ENCODE measurements at regions of chr22 and their contacts with region 1.

Region 1: DNA sequence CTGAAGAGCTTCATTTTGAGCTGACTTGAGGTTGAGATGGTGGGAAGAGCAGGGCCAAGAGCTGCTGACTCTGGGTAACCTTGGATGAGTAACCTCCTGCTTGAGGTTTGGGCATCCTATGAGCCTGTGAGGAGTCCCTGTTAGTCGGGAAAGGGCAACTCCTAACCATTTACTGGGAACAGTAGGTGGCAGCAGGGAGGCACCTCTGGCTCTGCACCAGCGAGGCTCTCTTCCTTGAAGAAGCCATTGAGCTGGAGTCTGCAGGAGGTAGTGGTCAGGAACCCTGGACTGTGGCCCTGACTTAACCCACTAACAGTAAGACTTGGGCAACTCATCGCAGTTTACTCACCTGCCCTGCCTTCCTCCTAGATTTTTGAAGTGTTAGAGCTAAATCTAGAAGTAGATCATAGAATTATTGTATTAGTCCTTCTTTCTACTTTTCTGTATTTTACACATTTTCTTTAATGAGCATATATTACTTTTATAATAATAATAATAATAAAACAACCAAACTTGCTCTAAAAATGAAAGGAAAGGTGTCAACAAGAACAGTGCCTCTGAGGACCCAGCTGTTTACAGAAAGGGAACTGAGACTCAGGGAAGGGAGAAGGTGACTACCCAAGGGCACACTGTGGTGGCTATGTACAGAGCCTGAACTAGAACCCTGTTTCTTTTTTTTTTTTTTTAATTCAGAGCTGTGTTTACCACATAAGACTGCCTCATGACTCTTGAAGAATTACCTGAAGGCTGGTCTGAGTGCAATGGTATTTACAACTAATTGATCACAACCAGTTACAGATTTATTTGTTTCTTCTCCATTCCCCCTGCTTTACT is 47.5 kb downstream of the MEI1 start:
- DNase-seq: peak; percentile 85
- ATAC-seq: peak; percentile 99
- H3K4me3 ChIP-seq: no peak overlapping the region
- H3K27ac ChIP-seq: no peak overlapping the region
- H3K4me1 ChIP-seq: no peaks in the 10 kb centered on the region
- H3K27me3 ChIP-seq: no peaks in the 10 kb centered on the region
- CTCF ChIP-seq: peak; percentile 77

Region 2: DNA sequence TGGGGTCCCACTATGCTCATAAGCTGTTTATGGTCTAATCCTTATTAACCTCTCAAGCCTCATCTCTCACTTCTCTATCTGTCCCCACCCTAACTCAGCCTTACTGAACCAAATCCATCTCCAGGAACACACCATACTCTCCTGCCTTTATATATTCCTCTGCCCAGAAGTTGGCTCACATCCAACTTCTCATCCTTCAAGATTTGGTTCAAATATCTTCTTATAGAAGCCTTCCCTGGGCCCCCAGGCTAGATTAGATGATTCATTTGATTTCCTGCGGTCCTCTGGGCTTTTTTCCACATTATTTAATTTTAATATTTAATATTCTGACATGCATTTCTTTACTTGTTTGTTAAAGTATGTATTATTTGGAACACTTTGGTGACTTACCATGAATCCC is 24.3 kb before region 1 on chr22:
- CTCF ChIA-PET with region 1: no interaction called
- POLR2A ChIA-PET with region 1: no interaction called
- intact Hi-C with region 1: no loop called
- DNase-seq: peak; percentile 3
- ATAC-seq: no peak
- H3K4me3 ChIP-seq: no peak overlapping the region
- H3K27ac ChIP-seq: no peak overlapping the region
- H3K4me1 ChIP-seq: no peaks in the 10 kb centered on the region
- H3K27me3 ChIP-seq: no peaks in the 10 kb centered on the region
- CTCF ChIP-seq: no peak

Region 3: DNA sequence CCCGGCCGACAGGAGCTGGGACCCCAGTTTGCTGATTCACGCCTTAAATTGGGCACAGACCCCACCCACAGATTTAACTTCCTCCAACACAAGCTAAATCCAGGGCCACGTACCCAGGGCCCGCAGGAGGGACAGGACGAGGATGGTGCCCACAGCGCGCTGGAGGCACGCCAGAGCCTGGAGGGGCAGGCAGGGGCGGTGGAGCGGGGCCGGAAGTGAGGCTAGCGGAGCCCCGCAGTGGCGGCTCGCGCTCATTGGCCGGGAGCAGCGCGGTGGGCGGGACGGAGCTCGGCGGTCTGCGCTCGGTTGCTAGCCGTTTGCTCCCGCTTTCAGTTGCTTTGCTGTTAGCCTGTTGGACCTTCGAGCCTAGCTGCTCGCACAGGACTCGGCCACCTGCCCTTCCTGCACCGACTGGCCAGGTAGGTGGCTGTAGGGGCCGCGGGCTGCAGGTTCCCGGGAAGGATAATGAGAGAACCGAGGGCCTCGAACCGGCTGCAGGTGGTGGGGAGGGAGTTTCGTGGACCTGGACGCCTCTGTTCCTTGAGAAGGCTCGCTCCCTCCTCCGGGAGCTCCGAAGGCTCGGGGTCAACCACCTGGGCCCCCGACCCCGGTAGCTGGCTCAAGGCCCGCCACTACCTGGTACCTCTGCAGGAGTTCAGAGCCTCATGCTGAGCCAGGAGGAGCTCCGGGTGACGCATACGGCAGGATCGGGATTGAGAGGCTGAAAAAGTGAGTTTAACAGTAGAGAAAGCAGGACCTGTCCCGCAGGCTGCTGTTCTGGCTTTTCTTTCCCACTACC is 53.8 kb after region 1 on chr22 and contains the start of gene CCDC134:
- CTCF ChIA-PET with region 1: interaction called, 5 read pairs
- POLR2A ChIA-PET with region 1: interaction called, 5 read pairs
- intact Hi-C with region 1: loop called (anchors 5 kb)
- DNase-seq: peak; percentile 80
- ATAC-seq: peak; percentile 95
- H3K4me3 ChIP-seq: peak within 1 kb of the TSS; percentile 97
- H3K27ac ChIP-seq: peak within 1 kb of the TSS; percentile 56
- H3K4me1 ChIP-seq: peaks cover 14% of the 10 kb centered on the region
- H3K27me3 ChIP-seq: no peaks in the 10 kb centered on the region
- CTCF ChIP-seq: no peak
- total RNA-seq, gene CCDC134: 7.9 and 17.6 TPM in 2 replicates

Region 4: DNA sequence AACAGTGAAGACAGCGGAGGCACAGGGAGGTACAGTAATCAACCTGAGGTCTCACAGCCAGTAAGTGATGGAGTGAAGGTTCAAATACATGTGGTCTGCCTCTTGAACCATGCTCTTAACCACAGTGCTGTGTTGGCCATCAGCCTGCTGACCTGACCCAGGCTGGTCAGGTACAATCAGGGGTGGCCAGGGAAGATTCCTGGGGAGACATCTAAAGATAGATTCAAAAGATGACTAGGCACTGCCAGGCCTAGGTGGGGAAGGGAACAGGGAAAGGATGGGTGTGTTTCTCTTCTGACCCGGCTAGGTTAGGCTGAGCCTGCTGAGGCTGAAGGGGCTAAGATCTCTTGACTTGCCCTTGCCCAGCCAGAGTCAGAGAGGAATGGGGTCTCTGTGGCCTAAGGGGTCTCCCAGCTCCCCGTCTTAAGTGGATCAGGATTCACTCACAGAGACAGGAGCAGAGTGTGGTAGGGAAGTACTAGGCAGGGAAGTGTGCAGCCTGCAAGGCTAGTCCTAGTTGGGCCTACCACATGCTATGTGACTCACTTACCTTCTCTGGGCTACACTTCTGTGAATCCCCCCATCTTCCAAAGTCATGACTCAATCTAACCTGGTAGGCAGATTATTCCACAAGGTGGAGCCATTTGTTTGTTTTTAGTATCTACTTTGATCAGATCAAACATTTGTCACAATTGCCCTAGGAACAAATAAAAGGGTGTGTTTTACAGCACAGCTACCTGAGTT is 75.7 kb after region 1 on chr22:
- CTCF ChIA-PET with region 1: no interaction called
- POLR2A ChIA-PET with region 1: no interaction called
- intact Hi-C with region 1: loop called (anchors 5 kb)
- DNase-seq: peak; percentile 91
- ATAC-seq: peak; percentile 93
- H3K4me3 ChIP-seq: no peak overlapping the region
- H3K27ac ChIP-seq: peak overlapping the region; percentile 75
- H3K4me1 ChIP-seq: peaks cover 13% of the 10 kb centered on the region
- H3K27me3 ChIP-seq: no peaks in the 10 kb centered on the region
- CTCF ChIP-seq: peak; percentile 72

Region 5: DNA sequence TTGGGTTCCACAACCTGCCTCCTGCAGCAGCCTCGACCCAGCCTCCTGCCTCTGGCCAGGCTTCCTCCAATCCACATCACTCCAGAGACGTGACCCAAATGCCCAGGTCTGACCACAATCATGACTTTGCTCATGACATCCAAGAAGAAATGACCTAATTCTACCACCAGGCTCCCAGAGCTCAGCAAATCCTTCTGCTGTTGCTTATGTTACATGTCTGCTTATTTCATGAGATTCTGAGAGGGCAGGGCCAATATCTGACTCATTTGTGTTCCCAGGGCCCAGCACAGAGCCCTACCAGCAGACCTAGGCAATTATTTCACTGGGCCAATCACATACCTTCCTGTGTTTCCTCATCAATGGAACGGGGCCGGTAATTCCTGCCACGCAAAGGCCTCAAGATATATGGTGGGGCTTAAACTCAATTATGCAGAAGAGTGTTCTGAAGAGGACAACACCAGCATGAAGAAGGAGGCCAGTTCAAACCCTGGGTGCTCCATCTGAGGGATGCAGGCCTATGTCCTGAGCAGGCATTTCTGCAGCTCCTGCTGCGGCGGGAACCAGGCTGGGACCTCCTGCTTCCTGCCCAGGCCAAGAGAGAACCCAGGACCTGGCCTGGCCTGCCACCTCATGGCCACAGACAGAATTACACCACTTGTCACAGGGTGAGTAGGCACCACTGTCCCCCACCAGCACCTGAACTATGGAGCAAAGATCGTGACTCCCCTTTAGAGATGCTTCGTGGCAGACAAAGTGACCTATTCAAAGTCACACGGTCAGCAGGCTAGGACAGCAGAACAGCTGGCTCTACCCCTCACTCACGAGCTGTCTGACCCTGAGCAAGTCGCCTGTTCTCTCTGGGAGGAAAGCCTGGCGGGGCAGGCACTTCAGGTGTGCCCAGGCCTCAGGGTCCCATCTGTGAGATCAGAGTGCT is 194.3 kb after region 1 on chr22:
- CTCF ChIA-PET with region 1: interaction called, 8 read pairs
- POLR2A ChIA-PET with region 1: no interaction called
- intact Hi-C with region 1: loop called (anchors 1 kb)
- DNase-seq: peak; percentile 67
- ATAC-seq: peak; percentile 76
- H3K4me3 ChIP-seq: no peak overlapping the region
- H3K27ac ChIP-seq: peak overlapping the region; percentile 31; the same call in 1 of the 2 replicates
- H3K4me1 ChIP-seq: peaks cover 11% of the 10 kb centered on the region
- H3K27me3 ChIP-seq: no peaks in the 10 kb centered on the region
- CTCF ChIP-seq: peak; percentile 75

Measured in PC-3 (cell line).